ENCODE measurements at regions of chr9 and their contacts with region 1.

Region 1: DNA sequence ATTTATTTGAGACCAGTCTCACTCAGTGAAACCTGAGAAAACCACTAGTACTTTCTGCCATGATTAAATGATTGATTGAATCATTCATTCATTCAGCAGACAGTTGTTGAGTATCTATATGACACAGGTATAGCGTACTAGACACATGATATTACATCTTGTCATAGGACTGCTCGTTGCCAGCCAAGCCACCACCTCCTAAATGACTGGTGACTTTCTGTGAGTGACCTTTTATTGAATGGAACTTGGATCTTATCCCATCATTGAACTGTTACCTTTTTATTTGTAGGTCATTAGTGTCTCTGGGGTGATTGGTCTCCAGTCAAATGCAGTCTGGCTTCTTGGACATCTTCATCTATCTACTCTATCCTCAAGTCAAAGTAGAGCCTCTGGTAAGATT is 80.7 kb downstream of the HACD4 start:
- DNase-seq: no peak

Region 2: DNA sequence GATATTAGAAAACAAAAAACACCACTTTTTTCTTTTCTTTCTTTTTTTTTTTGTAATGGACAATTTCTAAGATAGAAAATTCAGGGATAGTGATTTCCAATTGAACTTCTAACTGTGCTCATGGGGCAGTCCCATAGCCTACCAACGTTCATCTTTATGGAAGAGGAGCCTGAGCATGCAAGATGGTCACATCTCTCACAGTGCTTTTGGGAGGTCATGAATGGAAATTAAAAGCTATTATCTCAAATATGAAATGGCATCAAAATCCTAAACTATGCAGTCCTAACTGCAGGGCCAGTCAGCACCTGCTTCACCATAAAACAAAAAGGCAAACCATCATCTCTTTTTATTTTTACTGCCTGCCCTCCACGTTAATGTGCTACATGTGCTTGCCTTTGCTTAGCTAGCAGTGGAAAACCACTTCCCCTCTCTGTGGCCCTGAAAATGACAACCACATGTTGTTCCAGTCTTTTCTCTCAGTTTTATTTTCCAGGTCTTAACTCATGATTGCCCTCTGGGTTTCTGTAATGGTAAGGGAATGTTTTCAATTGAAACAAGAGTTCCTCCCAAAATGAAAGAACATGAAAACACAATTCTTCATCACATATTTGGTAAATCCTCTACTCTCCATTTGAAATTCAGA is 110.3 kb after region 1 on chr9:
- intact Hi-C with region 1: no loop called
- DNase-seq: no peak

Region 3: GRCh38 chr9:21102305-21102704 is 151.6 kb after region 1 on chr9:
- intact Hi-C with region 1: loop called (anchors 10 kb)
- DNase-seq: no peak

Measured in cardiac septum (tissue), 1 donor.